Endothelial cell of umbilical vein (primary cell): ENCODE measurements at regions of chr7 and their contacts with region 1.

Region 1: DNA sequence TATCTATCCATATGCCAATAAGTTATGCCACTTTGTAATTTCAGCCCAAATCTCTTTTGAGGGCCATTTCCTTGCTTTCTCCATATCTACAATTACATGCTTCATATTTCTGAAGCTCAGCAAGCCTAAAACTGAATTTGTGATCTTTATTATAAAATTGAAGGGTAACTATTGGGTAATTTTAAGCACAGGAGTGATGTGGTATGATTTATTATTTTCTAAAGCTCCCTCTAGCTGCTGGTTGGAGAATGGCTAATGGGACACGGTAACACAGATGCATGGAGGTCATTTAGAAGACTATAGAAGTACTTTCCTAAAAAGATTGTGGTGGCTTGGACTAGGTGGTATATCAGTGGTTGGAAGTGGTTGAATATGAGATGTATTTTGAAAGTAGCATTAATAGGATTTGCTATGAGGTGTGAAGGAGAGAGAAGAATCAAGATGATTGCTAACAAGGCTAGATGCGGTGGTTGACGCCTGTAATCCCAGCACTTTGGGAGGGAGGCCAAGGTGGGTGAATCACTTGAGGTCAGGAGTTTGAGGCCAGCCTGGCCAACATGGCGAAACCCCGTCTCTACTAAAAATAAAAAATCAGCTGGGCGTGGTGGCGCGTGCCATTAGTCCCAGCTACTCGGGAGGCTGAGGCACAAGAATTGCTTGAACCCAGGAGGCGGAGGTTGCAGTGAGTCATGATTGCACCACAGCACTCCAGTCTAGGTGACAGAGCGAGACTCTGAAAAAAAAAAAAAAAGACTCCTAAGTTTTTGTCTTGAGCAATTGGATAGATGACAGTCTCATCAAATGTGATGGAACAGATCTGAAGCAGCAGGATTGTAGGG is 13.9 kb downstream of the KLHDC10 start:
- DNase-seq: peak; percentile 14
- H3K4me3 ChIP-seq: no peak overlapping the region
- H3K27ac ChIP-seq: no peak overlapping the region
- H3K4me1 ChIP-seq: no peaks in the 10 kb centered on the region
- H3K27me3 ChIP-seq: no peaks in the 10 kb centered on the region
- CTCF ChIP-seq: peak; percentile 38 to 39
- POLR2A ChIP-seq: no peak

Region 2: GRCh38 chr7:129367700-129368388 is 716.4 kb before region 1 on chr7:
- CTCF ChIA-PET with region 1: no interaction called
- POLR2A ChIA-PET with region 1: no interaction called
- dilution Hi-C with region 1: no loop called
- intact Hi-C with region 1: no loop called
- DNase-seq: peak; percentile 77
- H3K4me3 ChIP-seq: no peak overlapping the region
- H3K27ac ChIP-seq: no peak overlapping the region
- H3K4me1 ChIP-seq: peaks cover 4% of the 10 kb centered on the region
- H3K27me3 ChIP-seq: no peaks in the 10 kb centered on the region
- CTCF ChIP-seq: peak; percentile 85 to 89
- POLR2A ChIP-seq: no peak

Region 3: DNA sequence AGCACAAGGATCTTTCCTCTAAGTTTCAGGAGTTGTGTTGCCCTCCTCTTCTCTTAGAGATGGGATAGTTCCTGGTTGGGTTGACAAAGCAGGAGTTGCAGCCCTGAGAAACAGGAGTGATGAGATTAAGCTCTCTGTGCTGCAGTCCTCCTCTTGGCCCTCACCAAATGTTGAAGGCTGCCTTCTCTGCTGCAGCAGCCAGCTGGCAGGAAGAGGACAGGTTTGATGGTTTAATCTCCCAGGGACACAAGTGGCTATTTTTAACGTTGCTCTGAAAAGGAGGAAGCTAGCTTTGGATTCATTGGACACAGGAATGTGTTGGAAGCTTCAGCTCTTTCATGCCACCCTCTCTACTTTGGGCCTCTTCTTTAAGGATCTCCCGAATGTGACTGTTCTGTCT is 640.6 kb before region 1 on chr7:
- CTCF ChIA-PET with region 1: no interaction called
- POLR2A ChIA-PET with region 1: no interaction called
- dilution Hi-C with region 1: no loop called
- intact Hi-C with region 1: no loop called
- DNase-seq: no peak
- H3K4me3 ChIP-seq: no peak overlapping the region
- H3K27ac ChIP-seq: no peak overlapping the region
- H3K4me1 ChIP-seq: peaks cover 12% of the 10 kb centered on the region
- H3K27me3 ChIP-seq: no peaks in the 10 kb centered on the region
- CTCF ChIP-seq: no peak
- POLR2A ChIP-seq: no peak

Region 4: GRCh38 chr7:130096243-130096827 is 12.1 kb after region 1 on chr7:
- CTCF ChIA-PET with region 1: interaction called, 17 read pairs
- POLR2A ChIA-PET with region 1: no interaction called
- dilution Hi-C with region 1: no loop called
- intact Hi-C with region 1: no loop called
- DNase-seq: no peak
- H3K4me3 ChIP-seq: no peak overlapping the region
- H3K27ac ChIP-seq: no peak overlapping the region
- H3K4me1 ChIP-seq: no peaks in the 10 kb centered on the region
- H3K27me3 ChIP-seq: no peaks in the 10 kb centered on the region
- CTCF ChIP-seq: no peak
- POLR2A ChIP-seq: no peak

Region 5: DNA sequence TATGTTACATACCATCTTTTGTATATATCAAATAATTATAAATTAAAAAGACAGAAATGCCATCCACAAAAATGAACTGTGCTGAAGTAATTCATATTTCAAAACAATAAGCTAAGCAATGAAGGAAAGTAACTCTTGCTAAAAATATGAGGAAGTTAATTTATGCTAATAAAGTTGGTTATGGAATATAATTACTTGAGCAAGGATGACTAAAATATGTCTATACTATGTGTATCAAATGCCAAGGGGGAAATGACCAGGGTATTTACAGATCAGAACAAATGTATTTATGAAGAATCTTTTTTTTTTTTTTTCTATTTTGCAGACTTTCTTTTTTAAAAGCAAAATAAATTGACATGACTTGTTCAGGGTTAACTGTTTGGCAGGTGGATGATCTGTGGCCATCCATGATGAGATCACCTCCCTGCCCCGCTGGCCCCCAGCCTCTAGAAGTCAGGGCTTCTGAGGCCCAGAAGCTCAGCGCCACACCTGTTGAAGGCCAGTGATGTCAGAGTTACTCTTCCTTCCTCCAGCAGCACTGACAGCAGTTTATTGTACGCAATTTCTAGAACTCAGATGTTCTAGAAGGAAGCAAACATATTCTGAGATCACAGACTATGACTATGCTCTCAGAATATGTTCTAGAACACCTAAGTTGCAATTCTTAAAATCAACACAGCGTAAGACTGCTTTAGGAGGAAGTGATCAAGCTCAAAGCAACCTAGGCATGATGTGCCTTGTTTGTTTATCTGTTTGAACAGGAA is 845.8 kb after region 1 on chr7:
- CTCF ChIA-PET with region 1: no interaction called
- POLR2A ChIA-PET with region 1: no interaction called
- dilution Hi-C with region 1: no loop called
- intact Hi-C with region 1: no loop called
- DNase-seq: no peak
- H3K4me3 ChIP-seq: no peak overlapping the region
- H3K27ac ChIP-seq: no peak overlapping the region
- H3K4me1 ChIP-seq: peaks cover 6% of the 10 kb centered on the region
- H3K27me3 ChIP-seq: no peaks in the 10 kb centered on the region
- CTCF ChIP-seq: no peak
- POLR2A ChIP-seq: no peak